CD8-positive, alpha-beta T cell (primary cell): ENCODE measurements at regions of chr12 and their contacts with region 1.

Region 1: GRCh38 chr12:7108796-7109571 is at the start of gene C1RL:
- DNase-seq: peak; percentile 58 to 85 (median 77)
- ATAC-seq: peak; percentile 46
- H3K4me3 ChIP-seq: peak within 1 kb of the TSS; percentile 88 to 97
- H3K4me3 Mint-ChIP-seq: peak within 1 kb of the TSS; percentile 94
- H3K27ac ChIP-seq: peak within 1 kb of the TSS; percentile 67 to 80
- H3K27ac Mint-ChIP-seq: peak within 1 kb of the TSS; percentile 93
- H3K4me1 ChIP-seq: peaks cover 16% of the 10 kb centered on the region
- H3K4me1 Mint-ChIP-seq: peaks cover 44% of the 10 kb centered on the region
- H3K27me3 ChIP-seq: no peaks in the 10 kb centered on the region
- H3K27me3 Mint-ChIP-seq: no peaks in the 10 kb centered on the region
- CTCF ChIP-seq: peak; percentile 90
- total RNA-seq, gene C1RL: 8.0 to 9.0 TPM

Region 2: DNA sequence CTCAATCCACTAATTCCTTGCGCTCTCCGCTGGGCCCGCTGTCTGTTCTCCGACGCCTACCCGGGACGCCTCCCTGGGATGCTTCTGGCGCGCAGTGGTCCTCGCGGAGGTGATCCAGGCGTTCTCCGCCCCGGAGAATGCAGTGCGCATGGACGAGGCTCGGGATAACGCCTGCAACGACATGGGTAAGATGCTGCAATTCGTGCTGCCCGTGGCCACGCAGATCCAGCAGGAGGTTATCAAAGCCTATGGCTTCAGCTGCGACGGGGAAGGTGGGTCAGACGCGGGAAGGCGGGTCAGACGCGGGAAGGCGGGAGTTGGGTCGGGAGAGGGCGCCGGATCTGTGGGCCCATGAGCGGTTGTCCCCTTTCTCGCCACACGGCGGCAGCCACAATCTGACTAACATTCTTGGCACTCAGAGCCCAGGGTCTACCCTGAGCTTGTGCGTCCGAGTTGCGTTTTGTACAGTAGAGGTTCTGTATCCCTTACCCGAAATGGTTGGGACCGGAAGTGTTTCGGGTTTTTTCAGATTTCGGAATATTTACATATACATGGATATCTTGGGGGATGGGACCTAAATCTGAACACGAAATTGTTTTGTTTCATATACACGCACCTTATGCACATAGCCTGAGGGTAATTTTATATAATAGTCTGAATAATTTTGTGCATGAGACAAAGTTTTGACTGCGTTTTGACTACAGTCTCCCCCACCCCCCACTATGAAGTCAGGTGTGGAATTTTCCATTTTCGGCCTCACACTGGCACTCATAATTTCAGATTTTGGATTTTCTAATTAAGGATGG is 164.4 kb before region 1 on chr12:
- CTCF ChIA-PET with region 1: interaction called, 12 read pairs
- POLR2A ChIA-PET with region 1: interaction called, 14 read pairs
- intact Hi-C with region 1: loop called in 1 of 2 experiments (anchors 2 kb)
- DNase-seq: peak; percentile 67 to 94 (median 89)
- ATAC-seq: peak; percentile 51
- H3K4me3 ChIP-seq: peak overlapping the region; percentile 90 to 97
- H3K4me3 Mint-ChIP-seq: peak overlapping the region; percentile 99
- H3K27ac ChIP-seq: peak overlapping the region; percentile 94 to 97
- H3K27ac Mint-ChIP-seq: peak overlapping the region; percentile 100
- H3K4me1 ChIP-seq: peaks cover 56% of the 10 kb centered on the region
- H3K4me1 Mint-ChIP-seq: peaks cover 63% of the 10 kb centered on the region
- H3K27me3 ChIP-seq: no peaks in the 10 kb centered on the region
- H3K27me3 Mint-ChIP-seq: no peaks in the 10 kb centered on the region
- CTCF ChIP-seq: peak; percentile 87

Region 3: GRCh38 chr12:7092229-7092985 is 16.6 kb before region 1 on chr12 and contains the start of gene C1R:
- CTCF ChIA-PET with region 1: interaction called, 26 read pairs
- POLR2A ChIA-PET with region 1: interaction called, 5 read pairs
- intact Hi-C with region 1: loop called in 1 of 2 experiments (anchors 1 kb)
- DNase-seq: peak; percentile 36 to 81 (median 72)
- ATAC-seq: peak; percentile 89
- H3K4me3 ChIP-seq: peak within 1 kb of the TSS; percentile 49 to 66
- H3K4me3 Mint-ChIP-seq: peak within 1 kb of the TSS; percentile 88
- H3K27ac ChIP-seq: no peak within 1 kb of the TSS
- H3K27ac Mint-ChIP-seq: peak within 1 kb of the TSS; percentile 29
- H3K4me1 ChIP-seq: peaks cover 14% of the 10 kb centered on the region
- H3K4me1 Mint-ChIP-seq: peaks cover 11% of the 10 kb centered on the region
- H3K27me3 ChIP-seq: no peaks in the 10 kb centered on the region
- H3K27me3 Mint-ChIP-seq: no peaks in the 10 kb centered on the region
- CTCF ChIP-seq: peak; percentile 82
- total RNA-seq, gene C1R: 3.8 TPM

Region 4: GRCh38 chr12:7123806-7124522 is 15.0 kb after region 1 on chr12:
- CTCF ChIA-PET with region 1: interaction called, 14 read pairs
- POLR2A ChIA-PET with region 1: no interaction called
- intact Hi-C with region 1: no loop called
- DNase-seq: no peak
- ATAC-seq: no peak
- H3K4me3 ChIP-seq: no peak overlapping the region
- H3K4me3 Mint-ChIP-seq: no peak overlapping the region
- H3K27ac ChIP-seq: no peak overlapping the region
- H3K27ac Mint-ChIP-seq: no peak overlapping the region
- H3K4me1 ChIP-seq: peaks cover 1% of the 10 kb centered on the region
- H3K4me1 Mint-ChIP-seq: peaks cover 5% of the 10 kb centered on the region
- H3K27me3 ChIP-seq: no peaks in the 10 kb centered on the region
- H3K27me3 Mint-ChIP-seq: no peaks in the 10 kb centered on the region
- CTCF ChIP-seq: no peak

Region 5: DNA sequence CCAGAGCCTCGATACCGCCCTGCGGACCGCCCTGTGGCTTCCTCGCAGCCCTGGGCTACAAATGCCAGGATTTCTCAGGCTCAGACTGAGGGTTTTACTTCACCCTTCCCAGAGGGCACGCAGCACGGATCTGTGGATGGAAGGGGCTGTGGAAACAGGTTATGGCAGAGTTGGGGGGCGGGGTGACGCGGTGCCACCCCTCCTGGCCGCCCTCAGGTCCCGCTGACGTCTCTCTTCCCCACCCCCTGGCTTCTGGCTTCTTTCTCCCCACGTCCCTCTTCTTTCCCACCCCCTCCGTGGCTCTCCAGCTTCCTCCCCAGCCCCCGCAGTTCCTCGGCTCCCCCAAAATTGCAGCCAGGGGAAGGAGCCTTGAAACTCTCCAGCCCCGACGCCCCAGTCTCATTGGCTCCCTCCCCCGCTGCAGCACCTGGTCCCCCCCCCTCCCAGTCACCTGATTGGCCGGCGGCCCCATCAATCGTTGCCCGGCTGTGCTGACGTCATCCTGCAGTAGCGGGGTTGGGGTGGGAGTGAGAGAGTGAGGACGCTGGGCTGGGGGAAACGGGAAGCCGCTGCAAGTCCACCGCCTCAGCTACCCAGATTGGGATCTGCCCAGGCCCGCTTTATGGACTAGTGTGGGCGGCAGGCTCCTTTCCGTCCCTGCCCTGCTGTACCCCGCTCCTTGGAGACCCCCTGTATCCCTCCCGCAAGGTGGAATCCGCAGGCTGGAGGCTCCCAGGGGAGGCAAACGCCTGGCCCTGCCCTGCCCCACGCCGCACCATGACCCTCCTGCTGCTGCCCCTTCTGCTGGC is 21.1 kb after region 1 on chr12 and contains the start of gene CLSTN3:
- CTCF ChIA-PET with region 1: interaction called, 14 read pairs
- POLR2A ChIA-PET with region 1: interaction called, 3 read pairs
- intact Hi-C with region 1: loop called in 1 of 2 experiments (anchors 1 kb)
- DNase-seq: peak; percentile 66 to 93 (median 87)
- ATAC-seq: peak; percentile 88
- H3K4me3 ChIP-seq: peak within 1 kb of the TSS; percentile 97 to 99
- H3K4me3 Mint-ChIP-seq: peak within 1 kb of the TSS; percentile 91
- H3K27ac ChIP-seq: peak within 1 kb of the TSS; percentile 73 to 88
- H3K27ac Mint-ChIP-seq: peak within 1 kb of the TSS; percentile 87
- H3K4me1 ChIP-seq: peaks cover 22% of the 10 kb centered on the region
- H3K4me1 Mint-ChIP-seq: peaks cover 32% of the 10 kb centered on the region
- H3K27me3 ChIP-seq: no peaks in the 10 kb centered on the region
- H3K27me3 Mint-ChIP-seq: no peaks in the 10 kb centered on the region
- CTCF ChIP-seq: no peak
- total RNA-seq, gene CLSTN3: 23.1 to 24.0 TPM